ENCODE measurements at regions of chr2 and their contacts with region 1.

Region 1: DNA sequence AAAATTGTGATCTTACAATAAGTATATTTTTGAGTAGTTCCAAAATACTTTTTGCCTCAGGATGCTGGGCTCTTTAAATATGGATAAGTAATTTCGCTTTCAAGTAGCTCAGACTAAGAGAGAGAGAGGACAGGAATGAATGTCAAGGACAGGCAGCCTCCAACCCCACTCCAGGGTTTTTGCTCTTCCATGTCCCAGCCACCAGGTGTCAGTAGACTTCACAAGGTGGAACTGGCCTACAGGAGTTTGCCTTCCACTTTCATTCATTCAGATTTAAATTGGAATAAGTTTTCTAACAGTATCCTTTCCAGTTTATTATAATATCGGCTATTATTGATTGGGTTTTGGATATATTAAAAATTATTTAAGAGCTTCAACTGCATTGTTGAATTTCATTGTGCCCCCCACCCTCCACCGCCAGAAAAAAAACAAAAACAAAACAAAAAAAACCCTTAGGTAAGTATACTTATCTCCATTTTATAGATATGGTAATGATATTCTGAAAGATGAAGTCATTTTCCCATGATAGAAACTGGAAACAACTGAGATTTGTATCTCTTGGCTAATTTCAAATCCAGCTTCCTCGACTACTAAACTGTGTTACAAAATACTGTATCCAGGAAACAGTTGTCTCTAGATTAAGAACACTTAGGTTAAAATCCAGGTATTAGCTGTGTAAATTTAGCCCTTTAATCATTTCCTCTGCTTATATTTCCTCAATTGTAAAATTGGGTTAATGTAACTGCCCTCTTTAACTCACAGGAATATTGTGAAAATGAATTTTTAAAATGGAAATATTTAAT is 793.1 kb downstream of the ERBB4 start:
- DNase-seq: peak; percentile 75
- ATAC-seq: peak; percentile 78
- H3K4me3 ChIP-seq: no peak overlapping the region
- H3K27ac ChIP-seq: no peak overlapping the region
- H3K4me1 ChIP-seq: no peaks in the 10 kb centered on the region
- H3K27me3 ChIP-seq: no peaks in the 10 kb centered on the region
- CTCF ChIP-seq: peak; percentile 87

Region 2: GRCh38 chr2:211354481-211354880 is 391.0 kb before region 1 on chr2:
- CTCF ChIA-PET with region 1: no interaction called
- POLR2A ChIA-PET with region 1: no interaction called
- intact Hi-C with region 1: no loop called
- DNase-seq: no peak
- ATAC-seq: no peak
- H3K4me3 ChIP-seq: no peak overlapping the region
- H3K27ac ChIP-seq: no peak overlapping the region
- H3K4me1 ChIP-seq: no peaks in the 10 kb centered on the region
- H3K27me3 ChIP-seq: peaks cover 4% of the 10 kb centered on the region; the same call in 1 of the 2 replicates
- CTCF ChIP-seq: no peak

Region 3: DNA sequence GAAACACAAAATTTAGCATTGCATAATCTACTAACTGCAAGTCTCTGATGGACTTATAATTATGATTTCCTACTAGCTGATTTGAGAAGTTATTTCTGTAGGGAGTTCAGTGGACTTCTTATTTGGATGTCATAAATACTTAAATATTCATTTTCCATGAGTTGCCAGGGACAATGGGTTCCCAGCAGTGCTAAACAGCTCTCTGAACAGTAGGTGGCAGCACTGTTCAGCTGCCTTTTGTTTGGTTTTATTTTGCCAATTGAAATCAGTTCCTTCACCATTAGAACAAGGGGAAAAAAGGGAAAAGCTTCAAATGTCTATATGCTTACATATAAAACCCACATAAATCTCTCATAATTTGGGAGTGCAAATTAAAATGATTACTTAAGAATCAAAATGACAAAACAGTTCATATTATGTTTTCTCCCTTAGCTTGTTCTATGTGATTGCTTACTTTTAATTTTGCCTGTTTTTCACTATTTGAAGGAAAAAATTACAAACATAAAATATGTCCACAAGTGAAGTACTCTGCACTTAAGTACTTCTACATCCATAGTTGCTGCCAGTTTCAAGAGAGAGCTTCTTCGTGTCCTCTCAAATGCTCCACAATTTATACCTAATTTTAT is 290.2 kb before region 1 on chr2:
- CTCF ChIA-PET with region 1: interaction called, 3 read pairs
- POLR2A ChIA-PET with region 1: no interaction called
- intact Hi-C with region 1: loop called (anchors 10 kb)
- DNase-seq: peak; percentile 78
- ATAC-seq: peak; percentile 79
- H3K4me3 ChIP-seq: no peak overlapping the region
- H3K27ac ChIP-seq: no peak overlapping the region
- H3K4me1 ChIP-seq: no peaks in the 10 kb centered on the region
- H3K27me3 ChIP-seq: no peaks in the 10 kb centered on the region
- CTCF ChIP-seq: peak; percentile 95

Region 4: GRCh38 chr2:211879323-211879722 is 133.8 kb after region 1 on chr2:
- CTCF ChIA-PET with region 1: no interaction called
- POLR2A ChIA-PET with region 1: no interaction called
- intact Hi-C with region 1: loop called (anchors 2 kb)
- DNase-seq: peak; percentile 24
- ATAC-seq: peak; percentile 67
- H3K4me3 ChIP-seq: no peak overlapping the region
- H3K27ac ChIP-seq: no peak overlapping the region
- H3K4me1 ChIP-seq: no peaks in the 10 kb centered on the region
- H3K27me3 ChIP-seq: no peaks in the 10 kb centered on the region
- CTCF ChIP-seq: peak; percentile 48

Region 5: GRCh38 chr2:211957799-211958385 is 212.4 kb after region 1 on chr2:
- CTCF ChIA-PET with region 1: no interaction called
- POLR2A ChIA-PET with region 1: no interaction called
- intact Hi-C with region 1: loop called (anchors 10 kb)
- DNase-seq: no peak
- ATAC-seq: peak; percentile 20
- H3K4me3 ChIP-seq: no peak overlapping the region
- H3K27ac ChIP-seq: no peak overlapping the region
- H3K4me1 ChIP-seq: peaks cover 4% of the 10 kb centered on the region; the same call in 1 of the 2 replicates
- H3K27me3 ChIP-seq: no peaks in the 10 kb centered on the region
- CTCF ChIP-seq: no peak

Region 6: DNA sequence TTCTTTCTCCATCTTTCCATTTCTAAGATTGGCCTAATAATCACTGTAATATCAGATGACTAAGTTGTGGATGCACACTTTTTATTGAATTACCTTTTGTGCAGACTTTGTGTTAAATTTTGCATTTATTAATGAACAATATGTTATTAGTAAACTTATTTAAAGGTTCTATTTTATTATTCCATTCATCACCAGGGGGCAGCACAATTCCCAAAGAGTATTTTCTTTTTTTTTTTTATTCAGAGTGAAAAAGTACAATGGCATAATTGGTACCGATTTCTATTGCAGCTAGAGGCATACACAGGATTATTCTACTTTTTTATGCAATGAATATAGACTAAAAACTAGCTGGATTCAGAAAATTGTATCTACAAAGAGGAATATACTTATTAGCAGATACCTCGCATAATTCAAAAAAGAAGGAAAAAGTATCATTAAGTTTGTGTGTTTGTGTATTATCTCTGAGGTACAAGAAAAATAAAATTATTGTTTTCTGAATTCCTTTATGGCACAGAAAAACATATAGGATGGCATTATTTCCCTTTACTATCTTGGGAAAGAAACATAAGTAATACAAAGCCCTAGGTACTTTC is 402.5 kb after region 1 on chr2:
- CTCF ChIA-PET with region 1: no interaction called
- POLR2A ChIA-PET with region 1: no interaction called
- intact Hi-C with region 1: loop called (anchors 5 kb)
- DNase-seq: peak; percentile 49
- ATAC-seq: no peak
- H3K4me3 ChIP-seq: no peak overlapping the region
- H3K27ac ChIP-seq: no peak overlapping the region
- H3K4me1 ChIP-seq: no peaks in the 10 kb centered on the region
- H3K27me3 ChIP-seq: no peaks in the 10 kb centered on the region
- CTCF ChIP-seq: peak; percentile 76

Region 7: DNA sequence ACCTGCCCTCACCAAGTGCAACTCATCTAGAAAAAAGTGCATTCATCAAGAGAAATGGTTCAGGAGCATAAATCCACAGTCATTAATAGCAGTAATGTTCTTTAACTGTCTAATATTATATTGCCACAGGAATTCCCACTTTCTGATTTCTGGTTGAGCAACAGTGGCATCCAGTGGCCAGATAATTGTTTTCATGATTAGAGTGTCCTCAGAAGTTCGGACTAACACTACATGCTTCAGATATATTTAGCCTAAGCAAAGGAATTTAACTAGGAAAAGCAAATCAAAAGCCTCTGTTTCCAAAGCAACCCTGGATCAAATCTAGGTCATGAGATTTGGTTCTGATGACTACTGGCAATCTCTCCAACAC is 802.9 kb after region 1 on chr2:
- CTCF ChIA-PET with region 1: no interaction called
- POLR2A ChIA-PET with region 1: no interaction called
- intact Hi-C with region 1: loop called (anchors 5 kb)
- DNase-seq: peak; percentile 68
- ATAC-seq: peak; percentile 71
- H3K4me3 ChIP-seq: no peak overlapping the region
- H3K27ac ChIP-seq: no peak overlapping the region
- H3K4me1 ChIP-seq: no peaks in the 10 kb centered on the region
- H3K27me3 ChIP-seq: peaks cover 10% of the 10 kb centered on the region; the same call in 1 of the 2 replicates
- CTCF ChIP-seq: peak; percentile 68